Head of caudate nucleus (tissue), 42 donors: ENCODE measurements at regions of chr17 and their contacts with region 1.

Region 1: GRCh38 chr17:42027961-42028790 is 8.3 kb downstream of the NKIRAS2 start:
- DNase-seq: no peak

Region 2: DNA sequence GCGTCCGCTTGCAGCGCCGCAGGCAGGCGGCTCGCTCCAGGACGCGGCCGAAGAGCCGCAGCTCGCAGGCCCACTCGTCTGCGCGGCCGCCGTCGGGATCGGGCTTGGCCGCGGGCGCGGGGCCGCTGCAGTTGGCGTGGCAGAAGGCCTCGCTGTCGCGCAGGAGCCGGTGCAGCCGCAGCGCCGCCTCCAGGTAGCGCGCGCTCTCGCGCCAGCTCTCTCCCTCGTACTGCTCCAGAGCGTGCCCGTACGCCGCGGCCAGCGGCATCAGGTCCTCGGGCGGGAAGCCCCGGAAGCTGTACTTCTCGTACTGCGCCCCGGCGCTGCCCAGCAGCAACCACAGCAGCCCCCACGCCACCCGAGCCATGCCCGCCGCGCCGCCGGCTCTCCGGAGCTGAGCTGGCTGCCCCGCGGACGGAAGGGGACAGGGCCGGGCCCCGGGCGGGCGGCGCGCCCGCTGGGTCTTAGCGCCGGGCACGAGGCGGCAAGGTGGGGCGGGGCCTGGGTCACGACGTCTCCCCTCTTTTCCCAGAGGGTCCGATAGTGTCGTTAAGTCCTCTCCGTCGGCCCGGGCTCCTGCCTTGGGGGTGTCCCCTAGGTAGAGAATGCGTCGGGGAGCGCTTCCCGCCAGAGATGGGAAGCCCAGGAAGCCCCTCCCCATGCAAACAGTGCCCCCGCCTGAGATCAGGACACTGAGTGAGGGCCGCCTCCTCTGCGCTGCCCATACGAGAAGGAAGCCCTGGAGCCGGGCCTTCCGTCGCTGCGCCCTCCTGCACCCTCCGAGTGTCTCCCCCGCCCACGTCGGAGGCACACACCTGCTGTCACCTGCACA is 216.4 kb before region 1 on chr17 and contains the start of gene P3H4:
- intact Hi-C with region 1: no loop called
- DNase-seq: peak; percentile 52 to 90 (median 81)

Region 3: GRCh38 chr17:42101513-42102319 is 73.5 kb after region 1 on chr17:
- intact Hi-C with region 1: loop called (anchors 5 kb)
- DNase-seq: peak in 41 of 42 donors; percentile 63 to 92 (median 79)